ENCODE measurements at regions of chr2 and their contacts with region 1.

Region 1: DNA sequence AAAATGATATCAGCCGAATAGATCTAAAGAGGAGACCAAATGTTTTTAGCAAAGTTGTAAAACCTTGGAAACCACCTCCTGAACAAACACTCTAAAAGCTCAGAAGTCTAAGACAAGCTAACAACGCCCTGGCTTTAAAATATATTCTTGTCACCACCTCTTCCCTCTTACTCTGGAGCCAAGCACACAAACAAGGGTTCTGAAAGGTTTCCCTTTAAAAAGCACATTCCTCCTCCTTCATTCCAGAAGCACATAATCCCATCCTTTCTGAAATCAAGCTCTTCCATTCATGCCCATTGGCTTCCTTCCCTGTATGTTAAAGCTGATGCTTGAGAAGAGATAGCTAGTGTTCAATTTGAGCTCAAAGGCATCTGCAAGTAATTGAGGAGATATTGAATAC is 382.0 kb downstream of the LNPK start:
- DNase-seq: peak in 1 of 2 experiments; percentile 29
- H3K4me3 ChIP-seq: no peak overlapping the region
- H3K4me3 Mint-ChIP-seq: peak overlapping the region; percentile 20
- H3K27ac Mint-ChIP-seq: peak overlapping the region; percentile 49
- H3K4me1 ChIP-seq: peaks cover 23% of the 10 kb centered on the region
- H3K4me1 Mint-ChIP-seq: peaks cover 34% of the 10 kb centered on the region
- H3K27me3 ChIP-seq: no peaks in the 10 kb centered on the region
- H3K27me3 Mint-ChIP-seq: no peaks in the 10 kb centered on the region
- CTCF ChIP-seq: no peak

Region 2: GRCh38 chr2:175606010-175606841 is 13.9 kb before region 1 on chr2:
- CTCF ChIA-PET with region 1: interaction called, 4 read pairs
- POLR2A ChIA-PET with region 1: interaction called, 8 read pairs
- intact Hi-C with region 1: loop called (anchors 1 kb)
- DNase-seq: peak; percentile 63 to 65
- H3K4me3 ChIP-seq: no peak overlapping the region
- H3K4me3 Mint-ChIP-seq: peak overlapping the region; percentile 52
- H3K27ac Mint-ChIP-seq: peak overlapping the region; percentile 49
- H3K4me1 ChIP-seq: peaks cover 24% of the 10 kb centered on the region
- H3K4me1 Mint-ChIP-seq: peaks cover 24% of the 10 kb centered on the region
- H3K27me3 ChIP-seq: no peaks in the 10 kb centered on the region
- H3K27me3 Mint-ChIP-seq: no peaks in the 10 kb centered on the region
- CTCF ChIP-seq: no peak